ENCODE measurements at regions of chr15 and their contacts with region 1.

Region 1: GRCh38 chr15:73991726-73992593 is at the start of gene STOML1:
- DNase-seq: peak; percentile 95
- ATAC-seq: peak; percentile 77
- H3K4me3 ChIP-seq: peak within 1 kb of the TSS; percentile 17 to 85 (median 62)
- H3K4me3 Mint-ChIP-seq: peak within 1 kb of the TSS; percentile 79
- H3K27ac ChIP-seq: peak within 1 kb of the TSS; percentile 50 to 67
- H3K27ac Mint-ChIP-seq: peak within 1 kb of the TSS; percentile 65
- H3K4me1 ChIP-seq: peaks cover 45 to 60% of the 10 kb centered on the region in 2 donors
- H3K4me1 Mint-ChIP-seq: peaks cover 54% of the 10 kb centered on the region
- H3K27me3 ChIP-seq: no peaks in the 10 kb centered on the region
- H3K27me3 Mint-ChIP-seq: no peaks in the 10 kb centered on the region
- CTCF ChIP-seq: peak; percentile 94
- total RNA-seq, gene STOML1: 6.2 and 8.3 TPM in 2 replicates

Region 2: DNA sequence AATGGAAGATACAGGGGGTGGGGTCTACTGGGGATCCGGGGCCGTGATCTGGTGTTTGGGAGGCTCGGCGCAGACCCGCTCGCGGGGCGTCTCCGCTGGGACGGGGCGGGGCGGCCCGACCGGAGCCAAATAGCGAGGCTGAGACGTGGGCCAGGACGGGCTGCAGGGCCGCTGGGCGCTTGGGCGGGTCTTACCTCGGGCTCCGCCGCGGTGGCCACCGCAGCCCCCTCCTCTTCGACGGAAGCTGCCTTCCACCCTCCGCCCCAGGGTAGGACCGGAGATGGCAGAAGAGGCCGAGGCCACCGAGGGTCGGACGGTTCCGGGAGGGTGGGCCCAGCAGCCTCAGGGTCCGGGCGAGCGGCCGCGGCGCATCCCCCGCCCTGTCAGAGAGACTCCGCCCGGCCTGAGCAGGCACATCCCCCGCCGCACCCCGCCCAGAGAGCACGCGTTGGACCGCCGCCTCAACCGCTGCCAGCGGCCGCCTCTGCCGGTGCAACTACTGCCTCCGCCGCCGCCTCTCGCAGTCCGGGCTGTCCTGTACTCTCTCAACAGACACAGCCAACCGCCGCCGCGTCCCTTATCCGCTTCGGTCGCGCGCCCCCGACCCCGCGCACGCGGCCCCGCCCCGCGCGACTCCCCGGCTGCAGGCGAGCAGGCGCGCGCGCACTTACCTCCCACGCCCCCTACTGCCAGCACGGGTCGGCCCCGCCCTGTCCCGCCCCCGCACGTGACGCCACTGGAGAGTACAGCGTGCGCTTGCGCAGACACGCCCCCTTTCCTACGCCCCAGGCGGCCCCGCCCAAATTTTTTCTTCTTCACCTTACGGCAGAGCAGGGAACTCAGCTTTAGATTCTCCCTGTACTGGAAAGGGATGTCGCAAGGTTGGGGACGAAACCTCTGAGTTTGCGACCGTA is 1874.2 kb before region 1 on chr15 and contains the start of gene MYO9A:
- CTCF ChIA-PET with region 1: no interaction called
- POLR2A ChIA-PET with region 1: no interaction called
- intact Hi-C with region 1: loop called (anchors 10 kb)
- DNase-seq: peak; percentile 100
- ATAC-seq: peak; percentile 74
- H3K4me3 ChIP-seq: peak within 1 kb of the TSS; percentile 72 to 94 (median 86)
- H3K4me3 Mint-ChIP-seq: peak within 1 kb of the TSS; percentile 94
- H3K27ac ChIP-seq: peak within 1 kb of the TSS; percentile 85
- H3K27ac Mint-ChIP-seq: peak within 1 kb of the TSS; percentile 99
- H3K4me1 ChIP-seq: peaks cover 14 to 17% of the 10 kb centered on the region in 2 donors
- H3K4me1 Mint-ChIP-seq: peaks cover 36% of the 10 kb centered on the region
- H3K27me3 ChIP-seq: no peaks in the 10 kb centered on the region
- H3K27me3 Mint-ChIP-seq: no peaks in the 10 kb centered on the region
- CTCF ChIP-seq: no peak
- total RNA-seq, gene MYO9A: 66.1 and 75.5 TPM in 2 replicates

Region 3: GRCh38 chr15:74007820-74008371 is 15.9 kb after region 1 on chr15:
- CTCF ChIA-PET with region 1: interaction called, 11 read pairs
- POLR2A ChIA-PET with region 1: interaction called, 6 read pairs
- intact Hi-C with region 1: loop called (anchors 1 kb)
- DNase-seq: peak; percentile 56
- ATAC-seq: peak; percentile 84
- H3K4me3 ChIP-seq: peak overlapping the region in 1 of 5 experiments; percentile 22
- H3K4me3 Mint-ChIP-seq: peak overlapping the region; percentile 78
- H3K27ac ChIP-seq: peak overlapping the region; percentile 69 to 87
- H3K27ac Mint-ChIP-seq: peak overlapping the region; percentile 89
- H3K4me1 ChIP-seq: peaks cover 33 to 52% of the 10 kb centered on the region in 2 donors
- H3K4me1 Mint-ChIP-seq: peaks cover 54% of the 10 kb centered on the region
- H3K27me3 ChIP-seq: no peaks in the 10 kb centered on the region
- H3K27me3 Mint-ChIP-seq: no peaks in the 10 kb centered on the region
- CTCF ChIP-seq: no peak

Region 4: GRCh38 chr15:74382004-74382816 is 390.2 kb after region 1 on chr15:
- CTCF ChIA-PET with region 1: no interaction called
- POLR2A ChIA-PET with region 1: no interaction called
- intact Hi-C with region 1: loop called (anchors 5 kb)
- DNase-seq: peak; percentile 84
- ATAC-seq: no peak
- H3K4me3 ChIP-seq: no peak overlapping the region
- H3K4me3 Mint-ChIP-seq: no peak overlapping the region
- H3K27ac ChIP-seq: peak overlapping the region in 1 of 2 donors; percentile 97
- H3K27ac Mint-ChIP-seq: peak overlapping the region; percentile 98
- H3K4me1 ChIP-seq: peaks cover 53 to 58% of the 10 kb centered on the region in 2 donors
- H3K4me1 Mint-ChIP-seq: peaks cover 59% of the 10 kb centered on the region
- H3K27me3 ChIP-seq: no peaks in the 10 kb centered on the region
- H3K27me3 Mint-ChIP-seq: no peaks in the 10 kb centered on the region
- CTCF ChIP-seq: peak; percentile 95

Region 5: GRCh38 chr15:74540761-74541493 is 549.0 kb after region 1 on chr15 and contains the start of gene ARID3B:
- CTCF ChIA-PET with region 1: no interaction called
- POLR2A ChIA-PET with region 1: no interaction called
- intact Hi-C with region 1: loop called (anchors 5 kb)
- DNase-seq: peak; percentile 96
- ATAC-seq: peak; percentile 90
- H3K4me3 ChIP-seq: peak within 1 kb of the TSS; percentile 79 to 100 (median 93)
- H3K4me3 Mint-ChIP-seq: peak within 1 kb of the TSS; percentile 99
- H3K27ac ChIP-seq: peak within 1 kb of the TSS; percentile 77
- H3K27ac Mint-ChIP-seq: peak within 1 kb of the TSS; percentile 97
- H3K4me1 ChIP-seq: peaks cover 26 to 41% of the 10 kb centered on the region in 2 donors
- H3K4me1 Mint-ChIP-seq: peaks cover 46% of the 10 kb centered on the region
- H3K27me3 ChIP-seq: no peaks in the 10 kb centered on the region
- H3K27me3 Mint-ChIP-seq: no peaks in the 10 kb centered on the region
- CTCF ChIP-seq: no peak
- total RNA-seq, gene ARID3B: 30.9 and 31.0 TPM in 2 replicates

Region 6: DNA sequence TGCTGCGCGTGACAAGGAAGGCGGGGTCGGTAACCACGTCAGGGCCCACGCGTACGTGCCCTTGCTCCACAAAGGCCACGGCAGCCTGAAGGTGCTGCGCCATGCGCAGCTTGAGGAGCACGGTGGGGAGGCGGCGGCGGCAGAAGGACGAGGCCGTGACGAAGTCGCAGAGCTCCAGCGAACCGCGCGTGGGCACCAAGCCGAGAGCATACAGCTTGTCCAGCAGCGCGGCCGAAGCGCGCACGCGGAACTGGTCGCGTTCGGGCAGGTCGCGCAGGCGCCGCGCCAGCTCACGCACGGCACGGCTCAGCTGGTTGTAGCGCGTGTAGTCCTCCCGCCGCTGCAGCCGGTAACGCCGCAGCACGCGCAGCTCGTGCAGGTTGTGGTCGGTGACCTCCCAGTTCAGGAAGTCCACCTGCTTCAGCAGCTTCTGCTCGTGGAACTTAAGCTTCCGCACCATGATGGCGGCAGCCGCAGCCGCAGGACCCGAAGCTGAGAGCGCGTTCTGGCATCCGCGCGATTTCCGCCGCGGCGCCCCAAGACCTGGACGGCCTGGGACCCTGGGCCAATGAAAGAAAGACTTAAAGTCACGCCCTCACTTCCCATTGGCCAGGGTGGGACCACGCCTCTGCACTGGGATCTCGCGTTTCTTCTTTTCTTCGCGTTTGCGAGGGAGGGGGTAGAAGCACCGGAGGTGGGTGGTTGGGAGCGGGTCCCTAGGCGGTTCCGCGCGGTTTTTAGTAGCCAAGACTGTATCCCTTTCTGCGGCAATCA is 1647.9 kb after region 1 on chr15 and contains the start of gene IMP3:
- CTCF ChIA-PET with region 1: no interaction called
- POLR2A ChIA-PET with region 1: no interaction called
- intact Hi-C with region 1: loop called (anchors 10 kb)
- DNase-seq: peak; percentile 96
- ATAC-seq: peak; percentile 93
- H3K4me3 ChIP-seq: peak within 1 kb of the TSS; percentile 72 to 91 (median 84)
- H3K4me3 Mint-ChIP-seq: peak within 1 kb of the TSS; percentile 95
- H3K27ac ChIP-seq: peak within 1 kb of the TSS; percentile 78 to 81
- H3K27ac Mint-ChIP-seq: peak within 1 kb of the TSS; percentile 96
- H3K4me1 ChIP-seq: peaks cover 29 to 36% of the 10 kb centered on the region in 2 donors
- H3K4me1 Mint-ChIP-seq: peaks cover 40% of the 10 kb centered on the region
- H3K27me3 ChIP-seq: peaks cover 0 to 4% (median 0%) of the 10 kb centered on the region in 4 experiments
- H3K27me3 Mint-ChIP-seq: no peaks in the 10 kb centered on the region
- CTCF ChIP-seq: no peak
- total RNA-seq, gene IMP3: 60.8 and 62.9 TPM in 2 replicates